Gastrocnemius medialis (tissue), 4 donors: ENCODE measurements at regions of chr6 and their contacts with region 1.

Region 1: GRCh38 chr6:33771146-33772081 is 17.5 kb downstream of the LEMD2 start:
- DNase-seq: peak in 1 of 2 donors; percentile 62
- ATAC-seq: peak; percentile 37 to 73
- H3K4me3 ChIP-seq: peak overlapping the region in 1 of 4 donors; percentile 22
- H3K27ac ChIP-seq: peak overlapping the region; percentile 66 to 82 (median 70)
- H3K4me1 ChIP-seq: peaks cover 32 to 40% of the 10 kb centered on the region in 2 donors
- H3K27me3 ChIP-seq: no peaks in the 10 kb centered on the region
- CTCF ChIP-seq: peak; percentile 80 to 97 (median 93)
- POLR2A ChIP-seq: no peak

Region 2: GRCh38 chr6:33700391-33701050 is 70.9 kb before region 1 on chr6:
- in situ Hi-C with region 1: loop called in 1 of 4 experiments (anchors 10 kb)
- intact Hi-C with region 1: no loop called
- DNase-seq: peak; percentile 58 to 61
- ATAC-seq: peak; percentile 81
- H3K4me3 ChIP-seq: no peak overlapping the region
- H3K27ac ChIP-seq: peak overlapping the region in 3 of 4 donors; percentile 12 to 54 (median 35)
- H3K4me1 ChIP-seq: peaks cover 21 to 40% of the 10 kb centered on the region in 2 donors
- H3K27me3 ChIP-seq: no peaks in the 10 kb centered on the region
- CTCF ChIP-seq: peak; percentile 23 to 77 (median 69)
- POLR2A ChIP-seq: no peak

Region 3: DNA sequence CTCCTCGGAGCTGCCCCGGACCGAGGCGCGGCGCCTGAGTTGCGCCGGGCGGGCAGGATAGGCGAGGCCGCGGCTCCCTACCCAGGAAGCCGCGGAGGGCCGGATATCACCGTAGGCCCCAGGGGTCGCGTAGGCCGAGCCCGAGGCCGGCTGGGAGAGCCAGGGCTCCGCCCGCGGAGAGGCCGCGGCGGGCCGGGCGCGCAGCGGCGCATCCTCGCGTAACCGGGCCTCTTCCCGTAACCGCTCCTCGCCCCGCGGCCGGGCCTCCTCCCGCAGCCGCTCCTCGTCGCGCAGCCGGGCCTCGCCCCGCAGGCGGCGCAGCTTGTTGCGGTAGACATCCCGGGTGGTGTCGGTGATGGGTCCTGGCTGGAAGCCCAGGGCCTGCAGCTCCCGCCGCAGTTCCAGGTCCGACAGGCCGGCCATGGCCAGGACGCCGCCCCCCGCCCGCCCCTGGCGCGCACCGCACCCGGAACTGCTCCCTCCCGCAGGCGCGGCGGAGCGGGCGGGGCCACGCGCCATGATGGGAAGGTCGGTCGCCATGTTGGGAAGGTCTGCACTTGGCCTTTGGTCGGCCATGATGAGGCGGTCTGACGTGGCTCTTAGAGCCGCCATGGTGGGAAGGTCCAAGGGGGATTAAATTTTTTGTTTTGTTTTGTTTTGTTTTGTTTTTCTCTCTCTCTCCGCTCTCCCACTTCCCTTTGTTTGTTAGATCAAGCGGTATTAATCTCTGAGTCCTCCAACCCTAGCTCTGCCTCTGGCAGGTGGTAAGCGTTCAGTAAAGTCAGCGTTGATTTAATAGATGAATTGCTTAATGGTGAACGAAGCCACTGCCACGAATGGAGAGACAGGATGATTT is 17.5 kb after region 1 on chr6 and contains the start of gene LEMD2:
- in situ Hi-C with region 1: no loop called
- intact Hi-C with region 1: loop called (anchors 2 kb)
- DNase-seq: peak; percentile 89 to 93
- ATAC-seq: peak; percentile 89 to 93
- H3K4me3 ChIP-seq: peak within 1 kb of the TSS; percentile 66 to 90 (median 68)
- H3K27ac ChIP-seq: peak within 1 kb of the TSS; percentile 94 to 97 (median 94)
- H3K4me1 ChIP-seq: peaks cover 31 to 36% of the 10 kb centered on the region in 2 donors
- H3K27me3 ChIP-seq: peaks cover 6 to 8% (median 8%) of the 10 kb centered on the region in 3 donors
- CTCF ChIP-seq: peak in 1 of 5 experiments; percentile 13
- POLR2A ChIP-seq: peak; percentile 92 to 96
- total RNA-seq, gene LEMD2: 34.1 to 39.1 (median 38.1) TPM

Region 4: DNA sequence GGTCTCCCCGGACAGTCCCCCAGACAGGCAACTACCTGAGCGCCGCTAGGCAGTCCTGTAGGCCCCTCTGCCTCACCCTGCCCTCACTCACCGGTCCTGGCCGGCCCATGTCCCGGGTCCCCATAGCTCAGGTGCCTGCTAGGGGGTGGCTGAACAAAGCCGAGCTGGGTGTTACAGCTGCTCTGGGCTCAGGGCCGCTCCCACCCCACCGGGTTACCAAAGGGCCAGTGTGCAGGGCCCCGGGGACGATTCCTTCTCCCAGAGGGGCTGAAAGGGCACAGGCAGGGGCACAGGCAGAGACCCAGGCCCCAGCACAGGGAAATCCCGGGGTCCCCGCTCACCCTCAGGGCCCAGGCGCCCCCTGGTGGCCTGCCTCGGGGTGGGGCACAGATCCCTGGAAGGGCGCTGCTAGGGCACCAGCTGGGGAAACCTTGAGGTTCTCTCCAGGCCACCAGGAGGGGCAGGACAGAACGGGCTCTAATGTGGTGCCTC is 256.1 kb after region 1 on chr6:
- in situ Hi-C with region 1: loop called in 2 of 4 experiments (anchors 10 kb)
- intact Hi-C with region 1: loop called (anchors 1 kb)
- DNase-seq: no peak
- ATAC-seq: no peak
- H3K4me3 ChIP-seq: no peak overlapping the region
- H3K27ac ChIP-seq: no peak overlapping the region
- H3K4me1 ChIP-seq: no peaks in the 10 kb centered on the region
- H3K27me3 ChIP-seq: no peaks in the 10 kb centered on the region
- CTCF ChIP-seq: peak; percentile 58 to 83 (median 78)
- POLR2A ChIP-seq: no peak

Region 5: GRCh38 chr6:34154668-34155447 is 383.4 kb after region 1 on chr6:
- in situ Hi-C with region 1: loop called in 3 of 4 experiments (anchors 10 to 25 kb)
- intact Hi-C with region 1: loop called (anchors 1 kb)
- DNase-seq: no peak
- ATAC-seq: peak in 1 of 2 donors; percentile 64
- H3K4me3 ChIP-seq: peak overlapping the region in 2 of 4 donors; percentile 21 to 28
- H3K27ac ChIP-seq: no peak overlapping the region
- H3K4me1 ChIP-seq: peaks cover 0 to 7% of the 10 kb centered on the region in 2 donors
- H3K27me3 ChIP-seq: peaks cover 14 to 28% (median 20%) of the 10 kb centered on the region in 3 donors
- CTCF ChIP-seq: peak; percentile 86 to 97 (median 90)
- POLR2A ChIP-seq: no peak